ENCODE measurements at regions of chr14 and their contacts with region 1.

Region 1: DNA sequence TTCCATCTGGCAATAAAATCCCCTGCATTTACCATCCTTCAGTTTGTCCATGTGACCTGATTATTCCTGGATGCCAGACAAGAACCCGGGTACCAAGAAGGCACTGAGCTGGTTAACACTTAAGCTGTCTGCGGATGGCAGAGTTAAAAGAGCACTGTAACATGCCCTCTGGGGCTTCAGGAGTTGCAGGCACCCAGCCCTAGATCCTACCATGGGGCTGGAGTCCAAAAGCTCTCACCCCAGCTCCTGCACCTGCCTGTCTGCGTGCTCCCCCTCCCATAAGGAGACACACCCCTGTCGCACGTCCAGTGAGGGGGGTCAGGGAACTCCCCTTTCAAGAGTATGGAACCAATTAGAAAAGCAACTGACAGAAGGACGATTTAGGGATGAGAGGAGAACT is 14.6 kb upstream of the FBXO34 start:
- DNase-seq: no peak
- ATAC-seq: no peak
- H3K4me3 ChIP-seq: no peak overlapping the region
- H3K27ac ChIP-seq: no peak overlapping the region
- H3K4me1 ChIP-seq: no peaks in the 10 kb centered on the region
- H3K27me3 ChIP-seq: peaks cover 25% of the 10 kb centered on the region
- CTCF ChIP-seq: no peak
- POLR2A ChIP-seq: no peak
- RAD21 ChIP-seq: no peak

Region 2: DNA sequence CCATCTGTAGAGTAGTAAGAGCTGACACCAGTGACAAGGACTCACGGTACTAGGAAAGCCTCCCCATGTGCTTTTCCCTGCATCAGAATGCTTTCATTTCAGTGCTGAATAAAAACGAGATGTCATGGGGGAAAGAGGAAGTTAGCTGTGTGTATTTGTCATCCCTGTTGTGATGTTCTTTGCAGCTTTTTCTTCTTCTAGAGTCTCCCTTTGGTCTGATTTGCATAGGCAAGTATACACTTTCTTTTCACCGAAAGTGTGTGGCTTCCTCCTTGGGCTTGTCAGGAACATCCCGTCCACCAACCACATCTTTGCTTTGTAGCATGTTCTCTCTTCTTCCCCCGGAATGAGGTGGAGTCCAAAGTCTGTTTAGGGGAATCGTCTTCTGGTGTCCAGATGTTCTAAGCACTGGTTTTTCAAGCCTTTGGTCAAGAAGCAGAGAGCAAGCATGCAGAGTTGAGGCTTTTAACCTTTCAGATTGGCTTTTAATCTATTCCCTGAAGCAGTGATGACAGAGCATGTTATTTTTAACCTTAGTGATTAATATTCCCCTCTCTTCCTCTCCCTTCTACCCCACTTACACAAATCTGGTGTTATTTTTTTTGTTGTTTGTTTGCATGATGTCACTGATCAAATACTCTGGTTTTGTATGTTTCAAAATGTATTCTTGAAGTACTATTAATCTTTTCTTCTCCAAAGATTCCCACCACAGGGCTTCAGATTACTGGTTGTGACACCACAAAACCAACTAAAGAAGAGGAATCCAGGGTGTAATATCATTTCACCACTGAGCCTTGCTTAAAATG is 526.2 kb before region 1 on chr14:
- CTCF ChIA-PET with region 1: no interaction called
- POLR2A ChIA-PET with region 1: no interaction called
- dilution Hi-C with region 1: no loop called
- in situ Hi-C with region 1: no loop called
- intact Hi-C with region 1: no loop called
- DNase-seq: peak; percentile 78
- ATAC-seq: peak; percentile 62
- H3K4me3 ChIP-seq: no peak overlapping the region
- H3K27ac ChIP-seq: peak overlapping the region; percentile 57; the same call in 1 of the 2 replicates
- H3K4me1 ChIP-seq: peaks cover 14% of the 10 kb centered on the region
- H3K27me3 ChIP-seq: no peaks in the 10 kb centered on the region
- CTCF ChIP-seq: no peak
- POLR2A ChIP-seq: no peak
- RAD21 ChIP-seq: no peak

Region 3: GRCh38 chr14:55245657-55246268 is 10.8 kb before region 1 on chr14:
- CTCF ChIA-PET with region 1: interaction called, 18 read pairs
- POLR2A ChIA-PET with region 1: no interaction called
- dilution Hi-C with region 1: no loop called
- in situ Hi-C with region 1: no loop called
- intact Hi-C with region 1: no loop called
- DNase-seq: peak; percentile 42
- ATAC-seq: 0 out of 2 replicates have a peak, but pooled peaks have one; percentile 35
- H3K4me3 ChIP-seq: no peak overlapping the region
- H3K27ac ChIP-seq: no peak overlapping the region
- H3K4me1 ChIP-seq: peaks cover 2% of the 10 kb centered on the region; the same call in 1 of the 2 replicates
- H3K27me3 ChIP-seq: peaks cover 24% of the 10 kb centered on the region
- CTCF ChIP-seq: peak; percentile 64
- POLR2A ChIP-seq: no peak
- RAD21 ChIP-seq: peak; percentile 59

Region 4: DNA sequence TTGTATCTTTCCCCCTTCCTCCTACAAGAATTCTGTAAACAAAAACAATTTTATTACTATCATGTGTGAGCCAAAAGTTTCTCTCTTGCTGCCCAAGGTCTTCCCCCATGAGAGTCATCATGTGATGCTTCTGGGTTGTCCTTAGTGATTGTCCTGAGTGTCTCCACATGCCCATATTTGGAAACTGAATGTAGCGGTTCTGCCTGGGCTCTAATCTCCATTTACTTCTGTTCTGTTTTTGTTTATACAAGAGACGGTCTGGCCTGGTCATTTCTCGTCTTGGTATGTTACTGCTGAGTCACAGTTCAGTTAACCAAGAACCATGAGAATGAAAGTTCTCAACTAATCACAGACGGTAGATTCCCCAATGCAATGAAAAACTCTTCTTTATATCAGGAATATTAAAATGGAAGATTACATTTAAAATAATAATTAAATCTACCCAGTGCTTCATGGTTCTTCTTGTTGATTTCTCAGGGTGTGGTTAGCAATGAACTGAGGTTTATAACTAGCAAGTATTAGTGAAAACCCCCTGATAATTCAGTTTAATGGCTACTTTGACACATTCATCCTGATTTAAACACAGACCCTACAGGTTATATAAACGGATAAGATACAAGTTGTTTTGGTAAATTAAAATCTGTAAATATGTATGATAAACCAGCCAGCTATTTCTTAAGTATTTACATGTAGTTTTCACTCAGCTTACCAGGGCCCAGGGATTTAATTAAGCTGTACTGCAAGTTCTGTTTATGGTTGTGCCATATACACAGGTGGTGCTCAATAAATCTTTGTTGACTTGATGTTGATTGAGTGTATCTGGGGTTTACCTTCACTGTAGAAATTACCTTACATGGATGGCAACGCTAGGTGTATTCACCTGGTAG is 942.8 kb after region 1 on chr14:
- CTCF ChIA-PET with region 1: no interaction called
- POLR2A ChIA-PET with region 1: no interaction called
- dilution Hi-C with region 1: no loop called
- in situ Hi-C with region 1: no loop called
- intact Hi-C with region 1: no loop called
- DNase-seq: peak; percentile 99
- ATAC-seq: peak; percentile 95
- H3K4me3 ChIP-seq: no peak overlapping the region
- H3K27ac ChIP-seq: peak overlapping the region; percentile 84
- H3K4me1 ChIP-seq: peaks cover 16% of the 10 kb centered on the region
- H3K27me3 ChIP-seq: no peaks in the 10 kb centered on the region
- CTCF ChIP-seq: no peak
- POLR2A ChIP-seq: peak; percentile 68
- RAD21 ChIP-seq: peak; percentile 21; the same call in 1 of the 2 replicates